ENCODE measurements at regions of chr4 and their contacts with region 1.

Region 1: DNA sequence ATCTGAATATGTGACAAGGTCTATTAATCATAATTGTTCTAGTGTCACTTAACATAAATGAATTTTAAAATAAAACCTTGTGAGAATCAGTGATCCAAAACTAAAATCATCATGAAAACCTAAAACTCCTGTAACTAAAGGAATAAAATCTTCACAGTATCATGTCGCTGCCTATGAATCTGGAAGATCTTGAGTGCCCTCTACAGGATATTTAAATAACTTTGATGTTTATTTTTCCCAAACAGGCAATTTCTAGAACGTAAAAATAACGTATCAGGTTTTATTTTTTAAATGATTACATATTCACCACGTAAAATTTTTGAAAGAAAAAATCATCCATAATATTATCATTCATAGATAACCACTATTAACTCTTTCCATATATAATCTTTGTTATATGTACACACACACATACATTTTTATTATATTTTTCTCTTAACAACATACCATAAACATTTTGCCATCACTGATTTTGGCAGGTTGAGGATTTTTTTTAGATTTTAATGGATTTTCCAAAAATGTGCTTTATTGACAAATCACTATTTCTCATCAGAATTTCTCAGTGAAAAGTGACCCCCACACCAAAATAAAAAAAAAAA is 79.6 kb downstream of the COMMD8 start:
- DNase-seq: peak; percentile 40
- ATAC-seq: no peak
- H3K4me3 ChIP-seq: no peak overlapping the region
- H3K27ac ChIP-seq: no peak overlapping the region
- H3K4me1 ChIP-seq: no peaks in the 10 kb centered on the region
- H3K27me3 ChIP-seq: no peaks in the 10 kb centered on the region
- CTCF ChIP-seq: peak; percentile 63; the same call in 1 of the 2 replicates

Region 2: GRCh38 chr4:46844325-46844917 is 539.5 kb before region 1 on chr4:
- CTCF ChIA-PET with region 1: no interaction called
- POLR2A ChIA-PET with region 1: no interaction called
- intact Hi-C with region 1: loop called (anchors 5 kb)
- DNase-seq: peak; percentile 63
- ATAC-seq: no peak
- H3K4me3 ChIP-seq: no peak overlapping the region
- H3K27ac ChIP-seq: no peak overlapping the region
- H3K4me1 ChIP-seq: no peaks in the 10 kb centered on the region
- H3K27me3 ChIP-seq: 0 out of 2 replicates have a peak, but pooled peaks cover 8% of the 10 kb centered on the region
- CTCF ChIP-seq: peak; percentile 76

Region 3: DNA sequence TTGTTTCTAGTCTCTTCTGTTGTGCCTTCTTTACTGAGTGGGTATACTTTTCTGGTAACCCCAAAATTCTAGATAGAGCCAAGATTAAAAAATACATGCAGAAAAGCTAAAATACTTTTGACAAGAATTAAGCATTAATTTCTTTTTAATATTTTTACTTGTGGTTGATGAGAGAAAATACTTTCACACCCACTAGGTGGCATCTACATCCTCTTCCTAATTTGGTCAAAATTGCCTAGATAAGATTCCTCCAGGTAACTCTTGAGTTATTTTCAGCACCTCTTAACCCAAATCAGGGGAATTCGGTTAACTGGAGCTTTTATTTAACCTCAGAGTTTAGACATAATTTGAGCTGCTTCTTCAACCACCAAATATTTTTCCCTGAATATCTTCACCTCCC is 446.4 kb before region 1 on chr4:
- CTCF ChIA-PET with region 1: no interaction called
- POLR2A ChIA-PET with region 1: no interaction called
- intact Hi-C with region 1: loop called (anchors 5 kb)
- DNase-seq: peak; percentile 21
- ATAC-seq: no peak
- H3K4me3 ChIP-seq: no peak overlapping the region
- H3K27ac ChIP-seq: no peak overlapping the region
- H3K4me1 ChIP-seq: no peaks in the 10 kb centered on the region
- H3K27me3 ChIP-seq: no peaks in the 10 kb centered on the region
- CTCF ChIP-seq: peak; percentile 43; the same call in 1 of the 2 replicates

Region 4: GRCh38 chr4:47418147-47418546 is 34.2 kb after region 1 on chr4:
- CTCF ChIA-PET with region 1: no interaction called
- POLR2A ChIA-PET with region 1: no interaction called
- intact Hi-C with region 1: no loop called
- DNase-seq: no peak
- ATAC-seq: no peak
- H3K4me3 ChIP-seq: no peak overlapping the region
- H3K27ac ChIP-seq: no peak overlapping the region
- H3K4me1 ChIP-seq: no peaks in the 10 kb centered on the region
- H3K27me3 ChIP-seq: peaks cover 18% of the 10 kb centered on the region
- CTCF ChIP-seq: no peak

Measured in PC-3 (cell line).